ENCODE measurements at regions of chr4 and their contacts with region 1.

Region 1: GRCh38 chr4:77203380-77204197 is 46.6 kb downstream of the CCNG2 start:
- DNase-seq: peak; percentile 77
- H3K4me3 ChIP-seq: no peak overlapping the region
- H3K27ac ChIP-seq: no peak overlapping the region
- H3K4me1 ChIP-seq: no peaks in the 10 kb centered on the region
- H3K27me3 ChIP-seq: peaks cover 58 to 63% of the 10 kb centered on the region in 2 experiments
- CTCF ChIP-seq: peak; percentile 70 to 77
- POLR2A ChIP-seq: no peak

Region 2: GRCh38 chr4:76504613-76505465 is 698.8 kb before region 1 on chr4:
- CTCF ChIA-PET with region 1: interaction called, 13 read pairs
- POLR2A ChIA-PET with region 1: no interaction called
- dilution Hi-C with region 1: no loop called
- intact Hi-C with region 1: no loop called
- DNase-seq: peak; percentile 61
- H3K4me3 ChIP-seq: no peak overlapping the region
- H3K27ac ChIP-seq: no peak overlapping the region
- H3K4me1 ChIP-seq: no peaks in the 10 kb centered on the region
- H3K27me3 ChIP-seq: peaks cover 12 to 14% of the 10 kb centered on the region in 2 experiments
- CTCF ChIP-seq: peak; percentile 42 to 46
- POLR2A ChIP-seq: no peak

Region 3: GRCh38 chr4:76597423-76597979 is 606.1 kb before region 1 on chr4:
- CTCF ChIA-PET with region 1: no interaction called
- POLR2A ChIA-PET with region 1: no interaction called
- dilution Hi-C with region 1: no loop called
- intact Hi-C with region 1: no loop called
- DNase-seq: no peak
- H3K4me3 ChIP-seq: no peak overlapping the region
- H3K27ac ChIP-seq: no peak overlapping the region
- H3K4me1 ChIP-seq: no peaks in the 10 kb centered on the region
- H3K27me3 ChIP-seq: no peaks in the 10 kb centered on the region
- CTCF ChIP-seq: no peak
- POLR2A ChIP-seq: no peak

Region 4: DNA sequence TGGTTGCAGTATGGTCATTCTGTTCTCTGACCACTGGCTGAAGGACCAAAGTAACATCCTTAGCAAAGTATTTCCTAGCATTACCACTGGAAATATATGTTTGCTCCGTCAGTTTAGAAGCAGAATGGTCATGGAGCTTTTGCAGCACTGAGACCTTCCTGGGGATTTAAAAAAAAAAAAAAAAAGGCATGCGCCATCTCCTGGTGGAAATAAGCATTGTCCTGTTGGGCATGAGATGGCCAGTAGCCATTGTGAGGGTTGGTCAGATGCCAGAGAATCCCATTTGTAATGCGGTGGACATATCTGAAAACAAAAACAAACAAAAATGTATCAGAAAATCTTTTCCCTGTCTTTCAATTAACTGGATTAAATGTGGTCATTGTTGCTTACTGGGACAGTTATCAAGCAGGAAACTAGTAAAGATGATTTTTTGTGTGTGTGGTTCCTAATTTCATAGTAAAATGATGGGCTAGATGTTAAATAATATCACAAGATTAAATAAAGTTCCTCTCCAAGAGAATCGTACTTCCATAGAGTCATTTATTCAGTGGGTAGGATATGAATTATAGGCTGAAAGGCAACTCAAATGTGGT is 445.2 kb before region 1 on chr4:
- CTCF ChIA-PET with region 1: interaction called, 11 read pairs
- POLR2A ChIA-PET with region 1: no interaction called
- dilution Hi-C with region 1: no loop called
- intact Hi-C with region 1: loop called (anchors 2 kb)
- DNase-seq: peak; percentile 78
- H3K4me3 ChIP-seq: no peak overlapping the region
- H3K27ac ChIP-seq: no peak overlapping the region
- H3K4me1 ChIP-seq: peaks cover 17% of the 10 kb centered on the region
- H3K27me3 ChIP-seq: no peaks in the 10 kb centered on the region
- CTCF ChIP-seq: peak; percentile 66 to 84
- POLR2A ChIP-seq: no peak

Region 5: DNA sequence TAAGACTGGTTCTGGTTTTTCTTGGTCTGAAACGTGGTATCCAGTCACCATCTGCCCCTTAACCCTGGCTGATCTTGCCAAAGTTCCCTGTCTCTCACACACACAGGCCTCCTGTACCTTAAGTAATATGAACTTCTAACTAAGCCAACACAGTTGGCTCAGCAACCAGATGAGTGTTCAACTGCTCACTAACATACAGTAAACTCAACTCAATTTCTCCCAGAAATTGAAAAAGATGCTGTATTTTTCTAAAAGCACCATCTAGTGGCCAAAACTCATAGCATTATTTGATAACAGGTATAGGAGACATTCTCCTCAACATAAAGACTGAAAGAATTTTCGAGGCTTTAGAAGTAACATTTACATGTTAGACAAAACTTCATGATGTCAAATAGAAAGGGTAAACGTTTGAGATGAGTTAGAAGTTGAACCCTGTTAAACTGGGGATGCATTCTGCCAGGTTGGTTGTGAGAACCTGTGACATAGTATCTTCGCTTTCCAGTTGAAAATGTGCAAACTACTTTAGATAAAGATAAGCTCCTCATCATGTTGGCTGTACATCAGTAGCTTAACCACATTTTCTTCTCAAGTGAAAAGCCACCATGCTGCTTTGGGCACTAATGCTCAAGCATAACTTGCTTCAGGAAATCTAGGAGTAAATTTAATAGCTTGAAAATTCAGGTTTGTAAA is 159.0 kb before region 1 on chr4:
- CTCF ChIA-PET with region 1: interaction called, 171 read pairs
- POLR2A ChIA-PET with region 1: no interaction called
- dilution Hi-C with region 1: no loop called
- intact Hi-C with region 1: loop called (anchors 2 kb)
- DNase-seq: peak; percentile 67
- H3K4me3 ChIP-seq: no peak overlapping the region
- H3K27ac ChIP-seq: no peak overlapping the region
- H3K4me1 ChIP-seq: peaks cover 7% of the 10 kb centered on the region
- H3K27me3 ChIP-seq: no peaks in the 10 kb centered on the region
- CTCF ChIP-seq: peak; percentile 37 to 46
- POLR2A ChIP-seq: no peak

Region 6: DNA sequence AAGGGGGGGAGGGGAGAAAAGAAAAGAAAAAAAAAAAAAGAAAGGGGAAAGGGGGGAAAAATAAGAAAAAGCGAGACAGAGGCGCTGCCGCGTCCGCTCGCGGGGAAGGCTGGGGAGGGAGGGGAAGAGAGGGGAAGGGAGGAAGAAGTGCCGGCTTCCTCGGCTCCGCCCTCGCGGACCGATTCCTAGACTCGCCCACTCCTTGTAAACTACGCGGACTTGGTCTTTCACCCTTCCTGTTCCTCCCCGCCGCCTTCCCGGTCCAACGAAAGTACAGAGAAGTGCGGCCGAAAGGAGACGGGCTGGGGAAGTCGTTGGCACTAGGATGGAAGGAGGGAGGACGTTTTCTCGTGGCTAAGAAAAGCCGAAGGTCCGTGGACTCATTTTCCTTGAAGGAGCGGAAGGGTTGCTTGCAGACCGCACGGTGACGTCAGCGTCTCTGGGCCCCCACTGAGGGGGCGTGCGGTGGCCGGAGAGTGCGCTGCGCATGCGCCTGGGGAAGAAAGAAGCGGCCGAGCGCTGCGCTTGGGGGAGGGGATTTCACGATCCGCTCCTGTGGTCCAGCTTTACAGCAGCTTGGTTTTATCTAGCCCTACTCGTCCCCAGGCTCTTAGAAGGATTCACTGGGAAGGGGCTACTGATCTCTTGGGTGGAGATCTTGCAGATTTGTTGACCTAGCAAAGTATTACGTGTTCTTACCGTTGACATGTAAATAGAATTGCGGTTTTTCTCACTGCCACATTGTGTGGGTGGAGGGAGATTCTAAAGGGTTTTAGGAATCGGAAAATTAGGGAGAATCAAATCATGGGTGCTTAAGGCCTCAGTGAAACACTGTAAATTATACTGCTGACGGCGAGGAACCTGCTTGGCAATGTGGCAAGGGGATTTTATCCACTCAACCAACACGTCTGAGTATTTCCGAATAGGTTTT is 127.5 kb before region 1 on chr4 and contains the start of gene CCNI:
- CTCF ChIA-PET with region 1: interaction called, 57 read pairs
- POLR2A ChIA-PET with region 1: no interaction called
- dilution Hi-C with region 1: no loop called
- intact Hi-C with region 1: no loop called
- DNase-seq: peak; percentile 99
- H3K4me3 ChIP-seq: peak within 1 kb of the TSS; percentile 83 to 98 (median 90)
- H3K27ac ChIP-seq: peak within 1 kb of the TSS; percentile 98
- H3K4me1 ChIP-seq: peaks cover 22% of the 10 kb centered on the region
- H3K27me3 ChIP-seq: no peaks in the 10 kb centered on the region
- CTCF ChIP-seq: no peak
- POLR2A ChIP-seq: peak; percentile 94
- total RNA-seq, gene CCNI: 212 and 227 TPM in 2 replicates

Region 7: GRCh38 chr4:77120886-77121508 is 82.6 kb before region 1 on chr4:
- CTCF ChIA-PET with region 1: interaction called, 7 read pairs
- POLR2A ChIA-PET with region 1: no interaction called
- dilution Hi-C with region 1: no loop called
- intact Hi-C with region 1: loop called (anchors 5 kb)
- DNase-seq: no peak
- H3K4me3 ChIP-seq: no peak overlapping the region
- H3K27ac ChIP-seq: no peak overlapping the region
- H3K4me1 ChIP-seq: no peaks in the 10 kb centered on the region
- H3K27me3 ChIP-seq: peaks cover 27 to 35% of the 10 kb centered on the region in 2 experiments
- CTCF ChIP-seq: no peak
- POLR2A ChIP-seq: no peak

Region 8: DNA sequence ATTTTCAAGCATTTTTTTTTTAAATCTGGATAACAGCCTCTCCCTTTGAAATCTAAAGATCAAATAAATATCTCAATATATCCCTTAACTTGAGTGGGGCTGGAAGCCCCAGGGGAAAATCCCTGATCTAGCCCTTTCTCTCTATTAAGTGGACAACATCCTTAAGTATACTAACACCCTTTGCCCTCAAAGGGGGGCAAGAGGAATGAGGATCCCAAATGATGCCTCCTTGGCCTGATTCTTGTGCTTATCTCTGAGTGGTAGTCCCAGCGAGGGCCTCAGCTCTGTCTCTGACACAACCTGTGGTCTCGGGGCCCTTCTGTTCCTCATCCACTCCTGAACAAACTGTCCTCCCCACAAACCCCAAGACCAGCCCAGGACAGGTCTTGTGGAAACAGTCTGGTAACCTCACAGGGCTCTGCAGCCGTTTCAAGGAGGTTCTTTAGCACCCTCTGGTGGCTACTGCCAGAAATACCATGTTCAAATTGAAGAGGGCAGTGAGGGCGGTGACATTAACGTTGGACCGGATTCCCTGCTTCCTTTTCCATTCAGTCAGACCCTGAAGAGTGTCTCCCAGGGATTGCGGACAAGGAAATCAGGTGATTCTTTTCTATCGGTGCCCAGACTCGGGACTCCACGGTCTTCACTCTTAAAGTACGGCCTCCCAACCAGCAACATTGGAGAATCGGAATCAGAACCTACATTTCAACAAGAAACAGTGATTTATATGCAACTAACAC is 415.0 kb after region 1 on chr4:
- CTCF ChIA-PET with region 1: no interaction called
- POLR2A ChIA-PET with region 1: no interaction called
- dilution Hi-C with region 1: no loop called
- intact Hi-C with region 1: no loop called
- DNase-seq: peak; percentile 75
- H3K4me3 ChIP-seq: no peak overlapping the region
- H3K27ac ChIP-seq: no peak overlapping the region
- H3K4me1 ChIP-seq: no peaks in the 10 kb centered on the region
- H3K27me3 ChIP-seq: peaks cover 2 to 8% of the 10 kb centered on the region in 2 experiments
- CTCF ChIP-seq: peak; percentile 84 to 90
- POLR2A ChIP-seq: no peak

Measured in endothelial cell of umbilical vein (primary cell).